Right cardiac atrium (tissue), 5 donors: ENCODE measurements at regions of chr1 and their contacts with region 1.

Region 1: GRCh38 chr1:201792534-201793305 is 36.2 kb upstream of the IPO9 start:
- DNase-seq: peak; percentile 68 to 84 (median 81)
- ATAC-seq: peak; percentile 82 to 86
- H3K4me3 ChIP-seq: no peak overlapping the region
- H3K27ac ChIP-seq: peak overlapping the region; percentile 87
- H3K4me1 ChIP-seq: peaks cover 19% of the 10 kb centered on the region
- H3K27me3 ChIP-seq: no peaks in the 10 kb centered on the region

Region 2: GRCh38 chr1:201655243-201655642 is 137.5 kb before region 1 on chr1:
- intact Hi-C with region 1: loop called in 1 of 4 experiments (anchors 5 kb)
- DNase-seq: no peak
- ATAC-seq: peak in 1 of 2 donors; percentile 12
- H3K4me3 ChIP-seq: no peak overlapping the region
- H3K27ac ChIP-seq: no peak overlapping the region
- H3K4me1 ChIP-seq: peaks cover 12% of the 10 kb centered on the region
- H3K27me3 ChIP-seq: no peaks in the 10 kb centered on the region

Region 3: DNA sequence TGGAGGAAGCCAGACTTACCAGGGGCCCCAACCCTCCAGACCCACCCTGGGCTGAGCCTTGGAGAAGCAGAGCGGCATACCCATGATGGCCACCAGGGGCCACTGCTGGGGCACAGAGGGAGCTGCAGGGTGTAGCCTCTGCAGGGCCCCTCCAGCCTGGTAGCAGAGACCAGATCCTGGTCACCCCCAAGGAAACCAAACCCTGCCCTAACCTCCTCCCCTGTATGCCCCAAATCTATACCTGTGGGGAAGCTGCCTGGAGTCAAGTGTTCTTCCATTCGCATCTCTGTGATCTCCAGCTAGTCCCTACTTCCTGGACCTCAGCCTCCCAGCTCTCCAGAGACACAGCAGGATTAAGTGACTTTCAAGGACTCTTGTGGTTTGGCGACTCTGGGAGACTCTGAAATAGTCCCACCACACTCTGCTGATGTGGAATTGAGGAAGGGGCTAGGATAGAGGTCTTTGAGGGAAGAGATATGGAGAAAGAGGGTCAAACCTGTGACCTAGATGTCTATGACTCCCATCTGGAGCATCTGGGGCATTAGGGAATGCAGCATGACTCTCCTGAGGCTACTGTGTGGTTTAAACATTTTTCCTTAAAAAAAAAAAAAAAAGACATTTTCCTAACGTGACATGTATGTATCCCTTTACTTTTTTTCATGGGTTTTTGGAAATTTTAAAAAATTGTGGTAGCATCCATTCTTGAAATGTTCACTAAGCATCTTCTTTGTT is 83.0 kb before region 1 on chr1:
- intact Hi-C with region 1: loop called (anchors 1 to 2 kb)
- DNase-seq: peak; percentile 78 to 90 (median 89)
- ATAC-seq: peak; percentile 56 to 60
- H3K4me3 ChIP-seq: no peak overlapping the region
- H3K27ac ChIP-seq: peak overlapping the region; percentile 15
- H3K4me1 ChIP-seq: peaks cover 28% of the 10 kb centered on the region
- H3K27me3 ChIP-seq: no peaks in the 10 kb centered on the region